ENCODE measurements at regions of chr6 and their contacts with region 1.

Region 1: DNA sequence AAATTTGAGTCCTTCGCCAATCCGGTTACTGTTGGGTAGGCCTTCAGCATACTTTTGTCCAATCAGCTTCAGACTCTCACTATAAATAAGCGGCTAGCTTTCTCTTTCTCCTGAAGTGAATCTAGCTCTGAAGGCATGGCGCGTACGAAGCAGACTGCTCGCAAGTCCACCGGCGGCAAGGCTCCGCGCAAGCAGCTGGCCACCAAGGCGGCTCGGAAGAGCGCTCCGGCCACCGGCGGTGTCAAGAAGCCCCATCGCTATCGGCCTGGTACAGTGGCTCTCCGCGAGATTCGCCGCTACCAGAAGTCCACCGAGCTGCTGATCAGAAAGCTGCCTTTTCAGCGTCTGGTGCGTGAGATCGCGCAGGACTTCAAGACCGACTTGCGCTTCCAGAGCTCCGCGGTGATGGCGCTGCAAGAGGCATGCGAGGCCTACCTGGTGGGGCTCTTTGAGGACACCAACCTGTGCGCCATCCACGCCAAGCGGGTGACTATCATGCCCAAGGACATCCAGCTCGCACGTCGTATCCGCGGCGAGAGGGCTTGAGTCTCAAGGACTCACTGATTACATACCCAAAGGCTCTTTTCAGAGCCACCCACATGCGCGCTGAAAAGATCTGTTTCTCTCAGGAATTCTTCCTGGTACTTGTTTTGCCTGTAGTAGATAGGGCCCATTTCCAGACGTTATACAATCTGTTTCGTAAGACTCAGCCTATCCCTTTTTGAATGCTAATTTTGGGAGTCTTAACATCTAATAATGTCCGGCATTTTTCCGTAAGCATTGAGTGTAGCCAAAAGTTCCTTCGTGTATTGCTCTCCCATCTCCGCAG is 102.0 kb downstream of the OR2B2 start:
- DNase-seq: peak; percentile 76 to 95
- ATAC-seq: peak; percentile 55 to 71 (median 63)
- H3K4me3 ChIP-seq: peak overlapping the region; percentile 63
- H3K4me3 Mint-ChIP-seq: peak overlapping the region; percentile 95
- H3K27ac ChIP-seq: peak overlapping the region; percentile 88
- H3K27ac Mint-ChIP-seq: peak overlapping the region; percentile 96 to 99
- H3K4me1 ChIP-seq: peaks cover 37% of the 10 kb centered on the region
- H3K4me1 Mint-ChIP-seq: peaks cover 49 to 56% of the 10 kb centered on the region in 2 donors
- H3K27me3 ChIP-seq: no peaks in the 10 kb centered on the region
- H3K27me3 Mint-ChIP-seq: no peaks in the 10 kb centered on the region
- CTCF ChIP-seq: no peak

Region 2: DNA sequence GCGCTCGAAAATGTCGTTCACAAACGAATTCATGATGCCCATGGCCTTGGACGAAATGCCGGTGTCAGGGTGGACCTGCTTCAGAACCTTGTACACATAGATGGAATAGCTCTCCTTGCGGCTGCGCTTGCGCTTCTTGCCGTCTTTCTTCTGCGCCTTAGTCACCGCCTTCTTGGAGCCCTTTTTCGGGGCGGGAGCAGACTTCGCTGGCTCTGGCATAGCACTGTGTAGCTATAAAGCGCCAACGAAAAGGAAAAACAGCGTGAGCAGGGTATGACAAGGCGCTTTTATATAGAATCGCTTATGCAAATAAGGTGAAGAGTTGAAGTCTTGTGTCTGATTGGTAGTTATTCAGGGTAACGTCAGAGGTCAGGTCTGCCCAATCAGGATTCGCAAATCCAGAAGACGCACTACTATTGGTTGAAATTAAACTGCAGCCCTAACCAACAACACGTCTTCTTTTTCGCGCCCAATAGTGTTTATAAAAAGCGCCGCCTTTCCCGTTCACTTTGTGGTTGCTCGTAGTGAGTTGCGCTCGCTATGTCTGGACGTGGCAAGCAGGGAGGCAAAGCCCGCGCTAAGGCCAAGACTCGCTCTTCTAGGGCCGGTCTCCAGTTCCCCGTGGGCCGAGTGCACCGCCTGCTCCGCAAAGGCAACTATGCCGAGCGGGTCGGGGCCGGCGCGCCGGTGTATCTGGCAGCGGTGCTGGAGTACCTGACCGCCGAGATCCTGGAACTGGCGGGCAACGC is 677.4 kb before region 1 on chr6:
- intact Hi-C with region 1: loop called (anchors 2 kb)
- DNase-seq: peak; percentile 87 to 98
- ATAC-seq: peak; percentile 82 to 95 (median 87)
- H3K4me3 ChIP-seq: peak overlapping the region; percentile 65
- H3K4me3 Mint-ChIP-seq: no peak overlapping the region
- H3K27ac ChIP-seq: peak overlapping the region; percentile 85
- H3K27ac Mint-ChIP-seq: no peak overlapping the region
- H3K4me1 ChIP-seq: peaks cover 29% of the 10 kb centered on the region
- H3K4me1 Mint-ChIP-seq: peaks cover 5 to 6% of the 10 kb centered on the region in 2 donors
- H3K27me3 ChIP-seq: no peaks in the 10 kb centered on the region
- H3K27me3 Mint-ChIP-seq: no peaks in the 10 kb centered on the region
- CTCF ChIP-seq: no peak

Region 3: GRCh38 chr6:27472617-27473400 is 337.3 kb before region 1 on chr6 and contains the start of gene ZNF184:
- intact Hi-C with region 1: loop called (anchors 10 kb)
- DNase-seq: peak; percentile 84 to 92
- ATAC-seq: peak; percentile 78 to 94 (median 86)
- H3K4me3 ChIP-seq: peak within 1 kb of the TSS; percentile 65
- H3K4me3 Mint-ChIP-seq: peak within 1 kb of the TSS; percentile 96
- H3K27ac ChIP-seq: peak within 1 kb of the TSS; percentile 85
- H3K27ac Mint-ChIP-seq: peak within 1 kb of the TSS; percentile 94
- H3K4me1 ChIP-seq: peaks cover 17% of the 10 kb centered on the region
- H3K4me1 Mint-ChIP-seq: peaks cover 40 to 48% of the 10 kb centered on the region in 2 donors
- H3K27me3 ChIP-seq: no peaks in the 10 kb centered on the region
- H3K27me3 Mint-ChIP-seq: no peaks in the 10 kb centered on the region
- CTCF ChIP-seq: no peak
- total RNA-seq, gene ZNF184: 12.8 to 21.7 (median 16.2) TPM

Region 4: DNA sequence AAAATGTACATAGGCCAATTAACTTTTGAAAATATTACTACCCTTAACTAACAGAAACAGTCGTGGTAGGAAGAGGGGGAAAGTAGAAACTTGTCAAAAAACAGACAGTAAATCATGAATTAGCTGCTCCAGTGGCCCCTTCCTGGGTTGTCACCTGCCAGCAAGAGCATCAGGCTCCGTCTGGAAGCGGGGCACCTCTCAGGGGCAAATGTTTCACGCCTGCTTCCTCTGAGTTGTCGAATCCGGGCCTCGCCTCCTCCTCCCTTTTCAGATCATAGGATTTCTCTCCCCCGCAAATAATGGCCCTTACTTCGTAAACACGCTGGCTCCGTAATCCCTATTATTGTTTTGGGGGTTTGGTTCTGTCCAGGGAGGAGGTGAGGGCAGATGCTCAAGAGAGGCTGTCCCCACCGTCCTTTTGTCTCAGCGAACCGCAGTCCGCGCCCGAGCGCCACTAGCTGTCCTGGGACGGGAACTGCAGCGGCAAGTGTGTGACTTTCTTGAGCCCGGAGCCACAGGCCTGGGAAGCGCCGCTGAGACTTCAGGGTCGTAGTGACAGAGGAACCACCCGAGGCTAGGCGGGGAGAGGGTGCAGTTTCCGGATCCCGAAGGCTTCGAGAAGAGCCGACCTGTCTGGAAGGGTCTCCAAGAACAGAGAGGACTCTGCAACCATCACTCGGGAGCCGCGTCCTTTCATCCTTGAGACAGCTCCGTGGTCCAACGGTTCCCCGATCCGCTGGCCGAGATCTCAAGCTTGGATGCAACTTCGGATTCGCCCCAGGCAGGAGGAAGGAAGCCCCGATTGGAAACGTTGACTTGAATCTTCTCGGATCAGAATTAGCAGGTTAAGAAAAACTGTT is 122.8 kb before region 1 on chr6:
- intact Hi-C with region 1: no loop called
- DNase-seq: peak; percentile 67 to 88
- ATAC-seq: peak; percentile 75 to 83 (median 76)
- H3K4me3 ChIP-seq: peak overlapping the region; percentile 52
- H3K4me3 Mint-ChIP-seq: peak overlapping the region; percentile 95
- H3K27ac ChIP-seq: no peak overlapping the region
- H3K27ac Mint-ChIP-seq: peak overlapping the region; percentile 94 to 96
- H3K4me1 ChIP-seq: peaks cover 12% of the 10 kb centered on the region
- H3K4me1 Mint-ChIP-seq: peaks cover 14 to 22% of the 10 kb centered on the region in 2 donors
- H3K27me3 ChIP-seq: peaks cover 2% of the 10 kb centered on the region
- H3K27me3 Mint-ChIP-seq: peaks cover 8 to 32% of the 10 kb centered on the region in 2 donors
- CTCF ChIP-seq: peak; percentile 53

Region 5: GRCh38 chr6:27753668-27754407 is 56.3 kb before region 1 on chr6:
- intact Hi-C with region 1: loop called (anchors 5 kb)
- DNase-seq: peak; percentile 19 to 75
- ATAC-seq: no peak
- H3K4me3 ChIP-seq: peak overlapping the region; percentile 81
- H3K4me3 Mint-ChIP-seq: peak overlapping the region; percentile 99
- H3K27ac ChIP-seq: no peak overlapping the region
- H3K27ac Mint-ChIP-seq: peak overlapping the region; percentile 95 to 100
- H3K4me1 ChIP-seq: peaks cover 15% of the 10 kb centered on the region
- H3K4me1 Mint-ChIP-seq: peaks cover 32 to 37% of the 10 kb centered on the region in 2 donors
- H3K27me3 ChIP-seq: no peaks in the 10 kb centered on the region
- H3K27me3 Mint-ChIP-seq: peaks cover 2 to 9% of the 10 kb centered on the region in 2 donors
- CTCF ChIP-seq: no peak

Region 6: GRCh38 chr6:27871924-27872638 is 61.9 kb after region 1 on chr6:
- intact Hi-C with region 1: loop called (anchors 1 kb)
- DNase-seq: peak; percentile 76 to 97
- ATAC-seq: peak; percentile 73 to 82 (median 78)
- H3K4me3 ChIP-seq: peak overlapping the region; percentile 68
- H3K4me3 Mint-ChIP-seq: peak overlapping the region; percentile 99
- H3K27ac ChIP-seq: peak overlapping the region; percentile 95
- H3K27ac Mint-ChIP-seq: peak overlapping the region; percentile 100
- H3K4me1 ChIP-seq: peaks cover 32% of the 10 kb centered on the region
- H3K4me1 Mint-ChIP-seq: peaks cover 44 to 50% of the 10 kb centered on the region in 2 donors
- H3K27me3 ChIP-seq: no peaks in the 10 kb centered on the region
- H3K27me3 Mint-ChIP-seq: no peaks in the 10 kb centered on the region
- CTCF ChIP-seq: no peak